ENCODE measurements at regions of chr7 and their contacts with region 1.

Region 1: GRCh38 chr7:94087664-94088352 is 83.7 kb upstream of the BET1 start:
- DNase-seq: peak; percentile 77
- H3K27ac ChIP-seq: no peak overlapping the region
- CTCF ChIP-seq: peak; percentile 94

Region 2: DNA sequence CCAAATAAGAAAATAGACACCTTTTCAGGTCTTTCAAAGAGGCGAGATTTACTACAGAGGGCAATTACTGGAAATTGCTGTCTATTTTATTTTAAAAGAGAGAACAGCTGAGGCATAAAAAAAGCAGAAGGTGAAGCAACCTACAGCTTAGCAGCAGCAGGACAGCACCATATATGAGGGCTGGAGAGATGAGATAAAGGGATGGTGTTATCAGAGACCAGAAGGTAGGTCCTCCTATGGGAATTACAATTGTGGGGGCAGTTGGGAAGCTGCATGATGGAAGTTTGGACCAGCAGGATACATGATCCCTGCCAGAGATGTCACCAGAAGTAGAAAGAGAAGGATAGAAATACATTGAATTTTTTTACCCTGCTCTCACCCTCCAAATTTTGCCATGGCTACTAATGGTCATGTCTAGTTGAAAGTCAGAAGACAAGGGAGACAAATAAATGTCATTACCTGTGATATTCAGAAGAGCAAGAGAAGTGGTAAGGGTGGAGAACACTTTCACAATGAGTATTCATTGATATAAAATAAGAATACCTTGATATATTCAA is 436.1 kb before region 1 on chr7:
- CTCF ChIA-PET with region 1: interaction called, 10 read pairs
- POLR2A ChIA-PET with region 1: no interaction called
- DNase-seq: no peak
- H3K27ac ChIP-seq: no peak overlapping the region
- CTCF ChIP-seq: no peak

Region 3: DNA sequence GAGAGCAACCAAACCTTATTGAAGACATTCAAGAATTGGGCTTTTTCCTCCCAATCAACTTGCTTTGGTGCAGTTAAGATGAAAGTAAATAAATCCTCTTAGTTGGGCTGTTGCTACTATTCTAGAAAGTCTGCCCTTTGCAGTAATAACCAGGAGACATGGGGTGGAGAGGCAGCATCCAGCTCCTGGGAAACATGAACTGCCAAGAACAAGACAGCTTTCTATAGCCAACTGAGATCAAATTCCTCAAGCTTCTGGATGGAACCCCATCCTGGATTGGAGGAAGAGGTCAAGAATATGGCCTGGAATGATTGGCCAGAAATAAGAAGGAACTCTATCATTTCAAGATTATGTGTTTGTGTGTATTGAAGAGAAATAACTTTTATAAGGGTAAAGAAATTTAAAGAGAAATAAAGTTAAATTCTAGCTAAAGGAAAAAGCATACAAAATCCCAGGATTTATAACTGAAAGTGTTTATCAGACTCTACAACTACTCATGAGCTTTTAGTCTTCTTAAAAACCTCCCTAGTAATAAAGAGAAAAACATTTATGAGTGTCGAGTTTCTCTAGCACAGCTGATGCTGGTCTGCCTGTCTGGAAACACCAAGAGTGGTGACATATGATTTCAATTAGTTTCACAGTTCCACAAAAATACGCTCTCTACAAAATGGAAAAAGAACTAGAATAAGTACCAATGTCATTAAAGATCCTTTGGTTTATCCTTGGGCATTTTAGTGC is 236.7 kb after region 1 on chr7:
- CTCF ChIA-PET with region 1: no interaction called
- POLR2A ChIA-PET with region 1: no interaction called
- DNase-seq: no peak
- H3K27ac ChIP-seq: no peak overlapping the region
- CTCF ChIP-seq: no peak

Measured in RWPE1 (cell line).